A549 (cell line): ENCODE measurements at regions of chr15 and their contacts with region 1.

Region 1: GRCh38 chr15:88834211-88834812 is 31.1 kb downstream of the ACAN start:
- DNase-seq: peak; percentile 44 to 57
- ATAC-seq: peak; percentile 61 to 87
- H3K4me3 ChIP-seq: no peak overlapping the region
- H3K27ac ChIP-seq: no peak overlapping the region
- H3K4me1 ChIP-seq: no peaks in the 10 kb centered on the region; the same call in 2 of the 3 replicates
- CTCF ChIP-seq: peak; percentile 84
- EP300 ChIP-seq: no peak
- POLR2A ChIP-seq: no peak
- RAD21 ChIP-seq: peak; percentile 95 to 96

Region 2: DNA sequence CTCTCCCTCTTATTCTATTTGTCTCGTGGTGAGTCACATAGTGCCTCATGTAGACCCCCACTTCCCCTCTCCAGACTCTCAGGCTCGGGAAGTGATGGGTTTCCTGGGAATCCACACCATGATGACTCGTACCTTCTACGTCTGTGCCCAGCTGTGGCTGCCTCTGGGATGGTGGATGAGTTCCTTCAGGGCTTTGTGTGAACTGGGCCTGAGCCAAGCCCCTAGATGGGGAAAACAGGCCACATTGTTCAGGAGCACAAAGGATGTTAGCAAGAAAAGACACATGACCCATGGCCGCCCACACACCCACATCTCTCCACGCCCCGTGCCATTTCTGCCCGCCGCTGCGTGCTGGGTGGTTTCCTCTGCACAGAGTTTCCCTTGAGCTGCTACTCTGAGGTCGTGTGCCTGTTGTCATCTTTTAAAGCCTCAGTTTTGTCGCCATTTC is 185.0 kb before region 1 on chr15:
- CTCF ChIA-PET with region 1: interaction called, 297 read pairs
- POLR2A ChIA-PET with region 1: no interaction called
- DNase-seq: peak in 1 of 2 experiments; percentile 61
- ATAC-seq: peak; percentile 25 to 44; a peak in 3 of 6 replicates
- H3K4me3 ChIP-seq: no peak overlapping the region
- H3K27ac ChIP-seq: peak overlapping the region in 1 of 2 experiments; percentile 46; a peak in 3 of 6 replicates
- H3K4me1 ChIP-seq: peaks cover 19% of the 10 kb centered on the region
- CTCF ChIP-seq: no peak
- EP300 ChIP-seq: no peak
- POLR2A ChIP-seq: no peak
- RAD21 ChIP-seq: no peak

Region 3: DNA sequence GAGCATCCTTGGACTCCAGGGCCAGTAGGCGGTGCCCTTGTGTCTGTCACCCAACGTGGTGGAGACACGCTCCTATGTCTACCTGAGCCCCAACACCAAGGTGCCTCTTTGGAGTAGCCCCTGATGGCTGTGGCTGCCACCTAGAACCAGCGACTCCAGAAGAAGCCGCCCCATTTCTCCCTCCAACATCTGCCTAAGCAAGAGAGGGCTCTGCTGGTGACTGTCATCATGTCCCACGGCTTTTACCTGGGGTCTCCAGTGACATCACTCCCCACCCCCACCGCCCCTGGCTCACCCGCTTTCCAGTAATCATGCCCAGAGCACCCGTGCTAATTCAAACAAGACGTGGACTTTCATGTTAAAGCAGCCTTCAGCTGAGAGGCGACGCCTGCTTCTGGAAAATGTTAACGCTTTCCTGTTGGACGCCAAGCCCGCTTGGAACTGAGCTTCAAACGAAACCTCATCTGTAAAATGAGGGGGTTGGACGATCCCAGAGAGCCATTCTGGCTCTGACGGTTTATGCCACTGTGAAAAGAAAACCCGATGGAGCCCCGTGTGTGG is 138.5 kb before region 1 on chr15:
- CTCF ChIA-PET with region 1: interaction called, 12 read pairs
- POLR2A ChIA-PET with region 1: no interaction called
- DNase-seq: no peak
- ATAC-seq: no peak
- H3K4me3 ChIP-seq: no peak overlapping the region
- H3K27ac ChIP-seq: no peak overlapping the region
- H3K4me1 ChIP-seq: no peaks in the 10 kb centered on the region
- CTCF ChIP-seq: no peak
- EP300 ChIP-seq: no peak
- POLR2A ChIP-seq: no peak
- RAD21 ChIP-seq: no peak

Region 4: GRCh38 chr15:88821993-88822392 is 12.3 kb before region 1 on chr15:
- CTCF ChIA-PET with region 1: interaction called, 46 read pairs
- POLR2A ChIA-PET with region 1: no interaction called
- DNase-seq: no peak
- ATAC-seq: no peak
- H3K4me3 ChIP-seq: no peak overlapping the region
- H3K27ac ChIP-seq: no peak overlapping the region
- H3K4me1 ChIP-seq: no peaks in the 10 kb centered on the region
- CTCF ChIP-seq: no peak
- EP300 ChIP-seq: no peak
- POLR2A ChIP-seq: no peak
- RAD21 ChIP-seq: no peak